H1 (cell line): ENCODE measurements at regions of chr3 and their contacts with region 1.

Region 1: DNA sequence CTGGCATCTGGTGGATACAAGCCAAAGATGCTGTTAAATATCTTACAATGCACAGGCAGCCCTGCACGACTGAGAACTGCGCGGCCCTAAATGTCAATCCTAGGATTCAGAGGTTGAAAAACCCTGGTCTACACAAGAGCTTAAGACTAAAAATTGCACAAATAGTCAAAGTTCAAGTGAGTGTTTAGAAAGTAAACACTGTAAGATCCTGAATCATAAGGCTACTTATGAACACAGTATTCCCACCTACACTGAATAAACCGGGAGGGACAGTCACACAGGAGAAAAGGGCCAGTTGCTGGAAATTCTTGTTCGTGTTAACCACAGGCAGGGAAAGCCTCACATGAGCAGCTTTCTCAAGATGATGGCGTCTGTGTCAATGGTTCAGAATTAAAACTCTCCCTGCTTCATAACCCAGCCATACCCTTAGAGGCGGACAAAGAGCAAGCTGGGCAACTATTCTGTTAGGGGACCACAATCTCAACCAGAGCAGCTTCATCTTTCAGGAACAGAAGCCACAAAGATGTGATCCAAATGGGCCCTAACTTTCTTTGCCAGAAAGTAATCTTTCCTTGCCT is 37.7 kb downstream of the LRIG1 start:
- DNase-seq: no peak
- H3K4me3 ChIP-seq: no peak overlapping the region
- H3K27ac ChIP-seq: no peak overlapping the region
- H3K4me1 ChIP-seq: peaks cover 0 to 12% (median 6%) of the 10 kb centered on the region in 4 experiments; a peak in 5 of 7 replicates
- H3K27me3 ChIP-seq: no peaks in the 10 kb centered on the region
- CTCF ChIP-seq: no peak
- EP300 ChIP-seq: no peak
- POLR2A ChIP-seq: no peak
- RAD21 ChIP-seq: no peak

Region 2: DNA sequence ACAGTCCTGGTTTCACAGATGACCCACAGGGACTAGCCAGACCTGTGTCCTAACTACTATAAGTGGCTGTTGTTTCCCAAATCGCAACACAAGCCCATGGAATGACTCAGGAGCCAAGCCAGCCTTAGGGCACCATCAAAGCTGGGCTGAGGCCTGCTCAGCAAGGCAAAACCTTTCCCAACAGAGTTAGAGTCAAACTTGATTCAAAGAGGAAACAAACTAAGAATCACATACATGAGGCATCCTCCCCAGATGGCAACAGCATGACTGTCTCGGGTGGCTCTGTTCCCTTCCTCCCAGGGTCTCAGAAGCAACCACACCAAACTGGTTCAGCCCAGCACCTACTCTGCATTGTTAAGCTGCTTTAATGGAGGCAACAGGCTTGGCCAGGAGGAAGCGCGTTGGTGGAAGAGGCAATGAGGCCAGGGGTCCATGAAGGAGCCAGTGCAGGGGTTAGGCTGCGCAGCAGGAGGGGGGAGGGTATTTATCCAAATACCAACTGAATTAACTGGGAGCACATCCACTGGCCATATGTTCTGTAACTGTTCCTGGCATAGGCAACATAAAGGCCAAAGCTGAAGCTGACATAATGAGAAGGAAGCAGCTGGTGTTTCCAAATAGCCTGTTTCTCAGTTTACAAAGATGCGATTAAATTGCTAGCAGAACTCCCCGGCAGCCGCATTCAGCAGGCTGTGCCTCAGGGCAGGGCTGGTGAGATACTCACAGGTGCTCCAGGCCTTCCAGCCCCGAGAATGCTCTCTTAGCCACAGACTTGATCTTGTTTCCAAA is 64.7 kb before region 1 on chr3:
- CTCF ChIA-PET with region 1: no interaction called
- POLR2A ChIA-PET with region 1: no interaction called
- DNase-seq: no peak
- H3K4me3 ChIP-seq: no peak overlapping the region
- H3K27ac ChIP-seq: no peak overlapping the region
- H3K4me1 ChIP-seq: peaks cover 0 to 11% (median 5%) of the 10 kb centered on the region in 4 experiments; a peak in 5 of 7 replicates
- H3K27me3 ChIP-seq: no peaks in the 10 kb centered on the region
- CTCF ChIP-seq: no peak
- EP300 ChIP-seq: no peak
- POLR2A ChIP-seq: no peak
- RAD21 ChIP-seq: no peak

Region 3: DNA sequence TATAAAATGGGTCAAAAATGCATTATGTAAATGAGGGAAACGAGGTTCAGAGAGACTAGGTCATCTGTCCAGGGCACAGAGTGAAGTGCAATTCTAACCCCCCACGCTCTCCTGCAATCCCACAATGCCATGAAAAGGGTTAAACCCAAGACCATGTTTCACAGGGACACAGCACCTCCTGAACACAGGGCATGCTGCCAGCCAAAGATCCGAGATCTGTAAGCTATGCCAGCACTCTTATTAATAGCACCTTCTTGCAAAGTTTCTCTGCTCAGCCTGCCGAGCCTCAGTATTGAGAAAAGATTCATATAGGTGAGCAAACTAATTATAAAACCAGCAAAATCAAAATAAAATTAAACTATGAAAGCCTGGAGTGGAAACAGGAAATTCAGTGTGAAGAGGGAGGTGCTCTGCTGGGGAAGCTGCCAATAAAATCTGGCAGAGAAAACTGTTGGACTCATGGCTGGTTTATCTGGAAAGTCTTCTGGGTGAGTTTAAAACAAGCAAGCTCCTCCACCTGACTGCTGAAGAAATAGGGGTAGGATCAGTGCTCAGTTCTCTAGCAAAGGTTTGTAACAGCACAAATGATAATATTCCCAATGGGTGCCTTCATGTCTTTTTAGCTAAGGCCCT is 12.6 kb before region 1 on chr3:
- CTCF ChIA-PET with region 1: interaction called, 4 read pairs
- POLR2A ChIA-PET with region 1: interaction called, 11 read pairs
- DNase-seq: no peak
- H3K4me3 ChIP-seq: no peak overlapping the region
- H3K27ac ChIP-seq: no peak overlapping the region
- H3K4me1 ChIP-seq: peaks cover 0 to 14% (median 13%) of the 10 kb centered on the region in 4 experiments; a peak in 6 of 7 replicates
- H3K27me3 ChIP-seq: no peaks in the 10 kb centered on the region
- CTCF ChIP-seq: no peak
- EP300 ChIP-seq: no peak
- POLR2A ChIP-seq: no peak
- RAD21 ChIP-seq: no peak